Activated T-helper 1 cell treated with anti-CD3 and anti-CD28 coated beads, Interleukin-12 subunit alpha, Interleukin-12 subunit beta, Interleukin-2, Interleukin-4 antibody, amounts not matched to agents 30 ng/mL and 10 ng/mL and 1 ng/mL, durations not matched to agents 14 hours and 24 hours and 36 hours (primary cell): ENCODE measurements at regions of chr3 and their contacts with region 1.

Region 1: GRCh38 chr3:48188266-48189201 is at the start of gene CDC25A:
- DNase-seq: peak; percentile 95
- H3K4me3 Mint-ChIP-seq: peak within 1 kb of the TSS; percentile 96
- H3K27ac Mint-ChIP-seq: peak within 1 kb of the TSS; percentile 92
- H3K4me1 Mint-ChIP-seq: peaks cover 35% of the 10 kb centered on the region
- H3K27me3 Mint-ChIP-seq: peaks cover 6% of the 10 kb centered on the region
- total RNA-seq, gene CDC25A: 50.9 and 52.6 TPM in 2 replicates

Region 2: GRCh38 chr3:47513125-47513929 is 675.2 kb before region 1 on chr3 and contains the start of gene ELP6:
- intact Hi-C with region 1: loop called (anchors 1 kb)
- DNase-seq: peak; percentile 95
- H3K4me3 Mint-ChIP-seq: peak within 1 kb of the TSS; percentile 97
- H3K27ac Mint-ChIP-seq: peak within 1 kb of the TSS; percentile 98
- H3K4me1 Mint-ChIP-seq: peaks cover 18% of the 10 kb centered on the region
- H3K27me3 Mint-ChIP-seq: no peaks in the 10 kb centered on the region
- total RNA-seq, gene ELP6: 44.7 and 47.9 TPM in 2 replicates

Region 3: GRCh38 chr3:48088749-48089466 is 99.6 kb before region 1 on chr3:
- intact Hi-C with region 1: loop called (anchors 1 kb)
- DNase-seq: peak; percentile 94
- H3K4me3 Mint-ChIP-seq: peak overlapping the region; percentile 97
- H3K27ac Mint-ChIP-seq: peak overlapping the region; percentile 99
- H3K4me1 Mint-ChIP-seq: peaks cover 35% of the 10 kb centered on the region
- H3K27me3 Mint-ChIP-seq: peaks cover 7% of the 10 kb centered on the region

Region 4: GRCh38 chr3:48240711-48241491 is 52.4 kb after region 1 on chr3 and contains the start of gene ZNF589:
- intact Hi-C with region 1: loop called (anchors 1 kb)
- DNase-seq: peak; percentile 93
- H3K4me3 Mint-ChIP-seq: peak within 1 kb of the TSS; percentile 91
- H3K27ac Mint-ChIP-seq: peak within 1 kb of the TSS; percentile 95
- H3K4me1 Mint-ChIP-seq: peaks cover 19% of the 10 kb centered on the region
- H3K27me3 Mint-ChIP-seq: no peaks in the 10 kb centered on the region
- total RNA-seq, gene ZNF589: 33.0 and 34.2 TPM in 2 replicates

Region 5: DNA sequence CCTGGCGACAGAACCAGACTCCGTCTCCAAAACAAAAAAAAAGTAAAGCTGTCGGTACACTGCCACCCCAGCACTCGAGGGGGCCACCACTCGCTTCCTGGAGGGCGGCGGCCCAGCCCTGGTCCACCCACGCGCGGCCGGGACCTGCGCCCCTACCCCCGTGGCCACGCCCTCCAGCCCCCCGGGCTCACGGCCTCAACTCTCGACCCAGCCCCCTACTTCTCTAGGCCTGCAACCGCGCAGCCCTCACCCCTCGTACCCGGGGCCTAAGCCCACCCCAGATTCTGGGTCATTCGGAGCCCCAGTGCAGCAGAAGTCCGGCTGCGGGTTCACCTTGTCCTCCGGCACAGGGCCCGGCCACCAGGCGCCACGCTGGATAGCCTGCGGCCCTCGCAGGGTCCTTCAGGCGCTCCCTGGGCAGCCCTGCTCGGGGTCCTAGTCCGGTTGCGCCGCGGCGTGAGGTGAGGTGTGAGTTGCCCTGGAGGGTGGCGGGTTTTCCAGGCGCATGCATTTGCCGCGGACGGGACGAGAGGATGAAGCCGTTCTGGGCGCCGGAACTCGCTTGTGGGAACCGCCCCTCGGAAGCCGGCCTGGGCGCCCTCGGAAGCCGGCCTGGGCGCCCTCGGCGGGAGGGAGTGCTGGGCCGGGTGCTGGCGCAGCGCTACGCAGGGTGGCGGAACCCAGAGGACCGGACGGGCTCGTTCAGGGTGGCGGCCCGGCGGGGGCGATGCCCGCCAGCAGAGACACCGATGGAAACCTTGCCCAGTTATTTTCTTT is 112.7 kb after region 1 on chr3:
- intact Hi-C with region 1: loop called (anchors 1 kb)
- DNase-seq: peak; percentile 87
- H3K4me3 Mint-ChIP-seq: peak within 1 kb of the TSS; percentile 95
- H3K27ac Mint-ChIP-seq: peak within 1 kb of the TSS; percentile 98
- H3K4me1 Mint-ChIP-seq: peaks cover 52% of the 10 kb centered on the region
- H3K27me3 Mint-ChIP-seq: peaks cover 11% of the 10 kb centered on the region

Region 6: DNA sequence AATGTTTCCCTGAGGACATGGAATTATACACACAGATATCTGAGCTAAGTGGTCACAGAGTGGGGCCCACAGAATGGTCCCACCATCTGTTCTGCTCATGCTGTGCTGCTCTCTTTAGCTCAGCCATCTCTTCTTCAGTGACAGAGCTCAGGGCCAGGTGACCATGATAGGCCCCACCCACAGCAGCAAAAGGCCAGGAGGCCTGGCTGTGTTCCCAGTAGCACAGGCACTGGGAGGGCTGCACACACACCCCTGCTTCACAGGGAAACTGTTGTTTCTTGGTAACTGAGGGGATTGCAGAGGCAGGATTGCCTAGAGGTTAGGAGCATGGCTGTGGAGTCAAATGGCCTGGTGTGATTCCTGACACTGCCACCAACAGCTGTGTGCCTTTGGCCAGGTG is 178.7 kb after region 1 on chr3:
- intact Hi-C with region 1: no loop called
- DNase-seq: no peak
- H3K4me3 Mint-ChIP-seq: no peak overlapping the region
- H3K27ac Mint-ChIP-seq: no peak overlapping the region
- H3K4me1 Mint-ChIP-seq: no peaks in the 10 kb centered on the region
- H3K27me3 Mint-ChIP-seq: peaks cover 10% of the 10 kb centered on the region

Region 7: DNA sequence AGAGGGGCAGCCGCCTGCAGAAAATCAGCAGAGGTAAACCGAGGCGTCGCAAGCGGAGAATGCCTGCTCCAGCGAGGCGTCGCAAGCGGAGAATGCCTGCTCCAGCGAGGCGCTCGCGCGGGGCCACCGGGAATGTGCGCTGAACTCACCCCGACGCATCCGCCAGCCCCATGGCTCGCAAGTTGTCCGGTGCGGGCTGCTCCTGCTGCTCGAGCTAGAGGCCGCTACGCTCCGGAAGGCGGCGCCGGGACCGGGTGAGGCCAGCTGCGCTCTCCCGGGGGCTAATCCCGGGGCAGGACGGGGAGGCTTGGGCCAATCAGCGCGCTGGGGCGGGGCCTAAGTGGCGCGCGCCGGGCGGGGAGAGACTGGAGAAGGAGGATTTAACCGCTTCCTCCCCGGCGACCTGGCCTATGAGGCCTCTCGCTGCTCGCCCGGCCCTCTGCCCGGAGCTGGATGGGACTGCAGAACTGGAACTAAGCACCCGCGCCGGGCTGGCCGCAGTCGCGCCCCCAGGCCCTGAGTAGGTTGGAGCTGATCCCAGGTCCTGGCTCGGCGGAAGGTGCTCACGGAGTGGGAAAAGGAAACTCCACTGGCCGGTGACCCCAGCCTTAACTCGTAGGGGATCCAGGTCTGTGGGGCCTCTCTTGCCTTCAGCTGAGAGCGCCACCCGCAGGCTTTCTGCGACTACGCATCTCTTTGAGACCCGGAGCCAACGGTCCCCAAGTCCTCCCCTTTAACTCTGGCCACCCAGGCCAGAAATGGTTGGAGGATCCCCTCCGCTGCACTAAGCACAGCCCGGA is 446.9 kb after region 1 on chr3 and contains the start of gene SLC26A6:
- intact Hi-C with region 1: loop called (anchors 1 kb)
- DNase-seq: peak; percentile 96
- H3K4me3 Mint-ChIP-seq: peak within 1 kb of the TSS; percentile 89
- H3K27ac Mint-ChIP-seq: peak within 1 kb of the TSS; percentile 87
- H3K4me1 Mint-ChIP-seq: peaks cover 20% of the 10 kb centered on the region
- H3K27me3 Mint-ChIP-seq: no peaks in the 10 kb centered on the region
- total RNA-seq, gene SLC26A6: 46.3 and 52.8 TPM in 2 replicates

Region 8: GRCh38 chr3:48847504-48848423 is 659.2 kb after region 1 on chr3 and contains the start of gene PRKAR2A:
- intact Hi-C with region 1: loop called (anchors 1 kb)
- DNase-seq: peak; percentile 79
- H3K4me3 Mint-ChIP-seq: peak within 1 kb of the TSS; percentile 87
- H3K27ac Mint-ChIP-seq: peak within 1 kb of the TSS; percentile 71
- H3K4me1 Mint-ChIP-seq: peaks cover 22% of the 10 kb centered on the region
- H3K27me3 Mint-ChIP-seq: no peaks in the 10 kb centered on the region
- total RNA-seq, gene PRKAR2A: 34.7 and 38.8 TPM in 2 replicates

Region 9: DNA sequence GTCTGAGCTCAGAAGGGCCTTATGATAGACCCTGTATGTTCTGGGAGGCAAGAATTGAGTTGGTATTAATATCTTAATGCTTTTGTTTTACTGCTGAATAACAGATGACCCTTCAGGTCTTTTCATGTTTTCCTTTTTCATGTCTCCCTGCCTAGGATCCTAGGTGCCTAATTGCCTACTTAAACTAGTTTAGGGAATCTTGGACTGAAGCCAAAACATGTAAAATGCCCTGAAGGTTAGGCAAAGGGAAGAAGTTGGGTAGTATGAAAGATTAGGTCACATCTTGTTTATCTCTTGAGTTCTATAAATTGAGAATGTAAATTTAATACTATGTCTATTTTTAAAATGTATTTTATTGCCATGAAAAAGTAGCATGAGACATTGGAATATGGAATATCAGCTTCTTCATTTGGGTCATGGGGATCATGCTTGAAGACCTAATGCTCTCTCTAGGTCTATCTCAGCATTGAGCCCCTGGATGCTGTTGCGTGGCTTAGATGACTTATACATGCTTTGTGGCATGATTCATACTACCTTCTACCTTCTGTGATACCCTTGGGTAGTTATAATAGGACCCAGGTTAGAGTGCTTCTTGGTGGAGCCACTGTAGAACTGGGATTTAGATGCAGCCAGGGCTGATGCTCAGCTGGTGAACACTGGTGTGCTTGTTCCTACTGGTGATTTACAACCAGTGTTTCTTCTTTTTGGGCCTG is 1777.9 kb after region 1 on chr3:
- intact Hi-C with region 1: no loop called
- DNase-seq: no peak
- H3K4me3 Mint-ChIP-seq: no peak overlapping the region
- H3K27ac Mint-ChIP-seq: no peak overlapping the region
- H3K4me1 Mint-ChIP-seq: no peaks in the 10 kb centered on the region
- H3K27me3 Mint-ChIP-seq: no peaks in the 10 kb centered on the region